ENCODE measurements at regions of chr2 and their contacts with region 1.

Region 1: GRCh38 chr2:31239593-31240177 is 5.7 kb downstream of the EHD3 start:
- DNase-seq: peak; percentile 60 to 92
- H3K4me3 ChIP-seq: peak overlapping the region; percentile 8 to 30
- H3K27ac ChIP-seq: peak overlapping the region; percentile 95 to 99
- H3K4me1 ChIP-seq: peaks cover 26 to 46% of the 10 kb centered on the region in 2 donors
- H3K27me3 ChIP-seq: no peaks in the 10 kb centered on the region
- CTCF ChIP-seq: no peak

Region 2: DNA sequence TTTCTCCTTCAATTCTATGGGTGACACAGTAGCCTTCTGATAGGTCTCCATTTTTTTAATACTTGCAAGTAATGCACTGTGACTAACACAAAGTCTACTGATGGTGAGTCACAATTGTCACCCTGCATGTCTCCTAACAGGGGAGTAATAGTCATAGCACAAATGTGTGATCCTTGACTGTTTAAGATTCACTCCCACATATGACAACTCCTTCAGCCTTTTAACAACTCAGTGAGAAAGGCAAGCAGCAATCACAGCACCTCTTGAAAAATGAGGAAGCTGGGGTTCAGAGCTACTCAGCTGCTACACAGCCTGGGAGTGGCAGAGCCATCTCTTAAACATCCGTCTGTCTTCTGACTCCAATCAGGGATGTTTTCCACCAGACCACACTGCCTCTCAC is 58.1 kb after region 1 on chr2:
- intact Hi-C with region 1: loop called (anchors 1 kb)
- DNase-seq: no peak
- H3K4me3 ChIP-seq: no peak overlapping the region
- H3K27ac ChIP-seq: peak overlapping the region; percentile 84 to 86
- H3K4me1 ChIP-seq: peaks cover 10 to 40% of the 10 kb centered on the region in 2 donors
- H3K27me3 ChIP-seq: no peaks in the 10 kb centered on the region
- CTCF ChIP-seq: no peak

Region 3: GRCh38 chr2:31378389-31378788 is 138.7 kb after region 1 on chr2:
- intact Hi-C with region 1: no loop called
- DNase-seq: no peak
- H3K4me3 ChIP-seq: no peak overlapping the region
- H3K27ac ChIP-seq: no peak overlapping the region
- H3K4me1 ChIP-seq: no peaks in the 10 kb centered on the region
- H3K27me3 ChIP-seq: no peaks in the 10 kb centered on the region
- CTCF ChIP-seq: no peak